Colonic mucosa (tissue), 4 donors: ENCODE measurements at regions of chr6 and their contacts with region 1.

Region 1: DNA sequence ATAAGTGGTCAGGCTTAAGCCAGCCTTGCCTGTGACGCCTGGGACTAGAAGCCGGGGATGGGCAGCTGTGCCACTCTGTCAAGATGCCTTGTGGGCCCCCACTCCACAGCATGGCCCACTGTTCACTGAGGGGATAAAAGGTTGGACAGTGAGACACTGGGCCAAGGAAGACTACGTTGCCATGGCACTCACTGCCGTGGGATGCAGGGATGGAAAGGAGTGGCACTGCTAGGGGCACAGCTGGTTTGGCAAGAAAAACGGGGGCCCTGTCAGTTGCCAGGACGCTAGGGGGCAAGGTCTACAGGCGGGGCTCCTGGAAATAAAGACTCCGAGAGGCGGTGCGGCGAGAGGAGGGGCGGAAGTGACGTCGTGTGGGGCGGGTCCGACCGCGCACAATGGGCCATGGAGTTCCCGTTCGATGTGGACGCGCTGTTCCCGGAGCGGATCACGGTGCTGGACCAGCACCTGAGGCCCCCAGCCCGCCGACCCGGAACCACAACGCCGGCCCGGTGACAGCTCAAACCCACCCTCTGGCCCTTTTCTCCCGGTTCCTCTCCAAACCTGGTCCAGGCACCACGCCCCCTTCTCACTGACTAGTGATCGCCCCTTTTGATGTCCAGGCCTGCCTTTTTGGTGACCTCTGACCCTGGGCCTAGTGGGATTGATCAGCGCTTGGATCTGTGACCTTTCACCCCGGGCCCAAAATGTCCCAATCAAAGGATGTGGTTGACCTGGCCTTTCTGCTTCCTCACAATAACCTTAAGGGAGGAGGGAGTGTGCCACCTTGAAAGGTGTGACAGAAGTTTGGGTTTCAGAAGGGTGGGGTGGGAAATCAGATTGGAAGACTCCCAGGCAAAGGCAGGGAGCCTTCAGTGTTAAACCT is at the start of gene ATAT1:
- DNase-seq: peak; percentile 96
- H3K4me3 ChIP-seq: peak within 1 kb of the TSS; percentile 58
- H3K27ac ChIP-seq: peak within 1 kb of the TSS; percentile 80
- H3K4me1 ChIP-seq: peaks cover 9% of the 10 kb centered on the region
- H3K27me3 ChIP-seq: no peaks in the 10 kb centered on the region
- CTCF ChIP-seq: no peak
- total RNA-seq, gene ATAT1: 11.5 to 15.9 TPM

Region 2: GRCh38 chr6:30672445-30673253 is 45.9 kb after region 1 on chr6 and contains the start of gene DHX16:
- intact Hi-C with region 1: loop called (anchors 2 kb)
- DNase-seq: peak; percentile 98
- H3K4me3 ChIP-seq: peak within 1 kb of the TSS; percentile 96
- H3K27ac ChIP-seq: peak within 1 kb of the TSS; percentile 75
- H3K4me1 ChIP-seq: peaks cover 9% of the 10 kb centered on the region
- H3K27me3 ChIP-seq: no peaks in the 10 kb centered on the region
- CTCF ChIP-seq: peak; percentile 83
- total RNA-seq, gene DHX16: 25.9 to 35.1 TPM